ENCODE measurements at regions of chr5 and their contacts with region 1.

Region 1: GRCh38 chr5:134070725-134071613 is 43.5 kb upstream of the TCF7 start:
- DNase-seq: peak; percentile 69
- ATAC-seq: peak; percentile 72
- H3K4me3 ChIP-seq: peak overlapping the region; percentile 69
- H3K27ac ChIP-seq: peak overlapping the region; percentile 66
- H3K4me1 ChIP-seq: peaks cover 33% of the 10 kb centered on the region
- H3K27me3 ChIP-seq: no peaks in the 10 kb centered on the region
- CTCF ChIP-seq: peak; percentile 5 to 27 (median 14); a peak in 3 of 6 replicates
- EP300 ChIP-seq: no peak
- POLR2A ChIP-seq: peak; percentile 60
- RAD21 ChIP-seq: no peak

Region 2: GRCh38 chr5:134083517-134083916 is 12.5 kb after region 1 on chr5:
- CTCF ChIA-PET with region 1: interaction called, 10 read pairs
- POLR2A ChIA-PET with region 1: interaction called, 3 read pairs
- RAD21 ChIA-PET with region 1: interaction called, 5 read pairs
- SMC1A ChIA-PET with region 1: interaction called, 13 read pairs
- in situ Hi-C with region 1: no loop called
- intact Hi-C with region 1: no loop called
- DNase-seq: no peak
- ATAC-seq: no peak; the same call in none of the 3 replicates
- H3K4me3 ChIP-seq: no peak overlapping the region
- H3K27ac ChIP-seq: no peak overlapping the region
- H3K4me1 ChIP-seq: no peaks in the 10 kb centered on the region
- H3K27me3 ChIP-seq: no peaks in the 10 kb centered on the region
- CTCF ChIP-seq: no peak
- EP300 ChIP-seq: no peak
- POLR2A ChIP-seq: no peak
- RAD21 ChIP-seq: no peak

Region 3: DNA sequence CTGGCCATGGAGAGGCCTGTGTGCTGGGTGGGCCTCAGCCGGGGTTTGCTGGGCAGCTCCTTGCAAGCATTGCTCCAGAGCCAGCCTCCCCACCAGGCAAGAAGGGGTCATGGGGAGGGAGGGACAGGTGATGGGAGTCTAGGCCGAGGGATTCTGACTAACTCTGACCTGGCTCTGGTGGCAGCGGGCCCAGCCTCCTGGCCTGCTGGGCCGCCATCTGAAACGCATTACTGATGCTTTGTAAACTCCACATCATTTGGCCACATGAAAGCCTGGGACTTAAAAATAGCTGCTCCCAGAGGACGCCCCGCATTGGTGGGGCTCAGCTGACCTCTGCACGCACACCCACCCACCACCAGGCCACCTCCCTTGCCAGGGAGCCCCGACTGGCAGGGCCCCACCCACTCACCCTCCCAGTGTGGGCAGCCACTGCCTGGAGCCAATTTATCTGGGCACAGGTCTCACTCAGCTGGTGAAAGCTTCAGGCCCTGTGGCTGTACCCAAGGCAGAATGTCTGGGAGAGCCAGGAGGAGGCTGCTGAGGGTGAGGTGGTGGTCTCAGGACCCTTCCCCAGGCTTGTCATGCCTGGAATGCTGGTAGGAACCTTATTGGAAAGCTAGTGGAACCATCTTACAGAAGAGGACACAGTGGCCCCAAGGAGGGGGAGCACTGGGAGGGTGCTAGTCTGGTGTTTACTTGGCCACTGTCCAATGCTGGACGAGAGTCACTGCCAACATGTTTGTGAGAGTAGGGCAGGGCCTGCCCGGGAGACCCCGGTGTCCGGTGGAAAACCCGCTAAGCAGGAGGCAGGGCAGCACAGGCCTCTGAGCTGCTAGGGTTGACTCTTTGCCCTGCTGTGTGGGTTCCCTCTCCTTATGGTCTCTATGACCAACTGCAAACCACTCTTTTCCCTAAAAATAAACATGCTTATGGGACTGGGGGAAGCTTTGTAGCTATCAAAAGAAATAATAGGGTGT is 54.4 kb after region 1 on chr5:
- CTCF ChIA-PET with region 1: interaction called, 5 read pairs
- POLR2A ChIA-PET with region 1: interaction called, 6 read pairs
- RAD21 ChIA-PET with region 1: interaction called, 10 read pairs
- SMC1A ChIA-PET with region 1: interaction called, 12 read pairs
- in situ Hi-C with region 1: no loop called
- intact Hi-C with region 1: no loop called
- DNase-seq: no peak
- ATAC-seq: peak; percentile 41
- H3K4me3 ChIP-seq: no peak overlapping the region
- H3K27ac ChIP-seq: peak overlapping the region; percentile 47
- H3K4me1 ChIP-seq: peaks cover 64% of the 10 kb centered on the region
- H3K27me3 ChIP-seq: no peaks in the 10 kb centered on the region
- CTCF ChIP-seq: no peak
- EP300 ChIP-seq: 0 out of 4 replicates have a peak, but pooled peaks of 1 of the 2 experiments have one; percentile 11
- POLR2A ChIP-seq: no peak
- RAD21 ChIP-seq: no peak

Region 4: GRCh38 chr5:134140530-134141201 is 69.7 kb after region 1 on chr5:
- CTCF ChIA-PET with region 1: interaction called, 39 read pairs
- POLR2A ChIA-PET with region 1: interaction called, 7 read pairs
- RAD21 ChIA-PET with region 1: interaction called, 34 read pairs
- SMC1A ChIA-PET with region 1: interaction called, 30 read pairs
- in situ Hi-C with region 1: no loop called
- intact Hi-C with region 1: no loop called
- DNase-seq: no peak
- ATAC-seq: peak; percentile 68
- H3K4me3 ChIP-seq: no peak overlapping the region
- H3K27ac ChIP-seq: peak overlapping the region; percentile 90
- H3K4me1 ChIP-seq: peaks cover 50% of the 10 kb centered on the region
- H3K27me3 ChIP-seq: no peaks in the 10 kb centered on the region
- CTCF ChIP-seq: peak; percentile 78 to 83 (median 80)
- EP300 ChIP-seq: no peak
- POLR2A ChIP-seq: peak; percentile 41; the same call in 1 of the 2 replicates
- RAD21 ChIP-seq: peak; percentile 82

Measured in GM12878 (cell line).